Endothelial cell of umbilical vein (primary cell): ENCODE measurements at regions of chr1 and their contacts with region 1.

Region 1: DNA sequence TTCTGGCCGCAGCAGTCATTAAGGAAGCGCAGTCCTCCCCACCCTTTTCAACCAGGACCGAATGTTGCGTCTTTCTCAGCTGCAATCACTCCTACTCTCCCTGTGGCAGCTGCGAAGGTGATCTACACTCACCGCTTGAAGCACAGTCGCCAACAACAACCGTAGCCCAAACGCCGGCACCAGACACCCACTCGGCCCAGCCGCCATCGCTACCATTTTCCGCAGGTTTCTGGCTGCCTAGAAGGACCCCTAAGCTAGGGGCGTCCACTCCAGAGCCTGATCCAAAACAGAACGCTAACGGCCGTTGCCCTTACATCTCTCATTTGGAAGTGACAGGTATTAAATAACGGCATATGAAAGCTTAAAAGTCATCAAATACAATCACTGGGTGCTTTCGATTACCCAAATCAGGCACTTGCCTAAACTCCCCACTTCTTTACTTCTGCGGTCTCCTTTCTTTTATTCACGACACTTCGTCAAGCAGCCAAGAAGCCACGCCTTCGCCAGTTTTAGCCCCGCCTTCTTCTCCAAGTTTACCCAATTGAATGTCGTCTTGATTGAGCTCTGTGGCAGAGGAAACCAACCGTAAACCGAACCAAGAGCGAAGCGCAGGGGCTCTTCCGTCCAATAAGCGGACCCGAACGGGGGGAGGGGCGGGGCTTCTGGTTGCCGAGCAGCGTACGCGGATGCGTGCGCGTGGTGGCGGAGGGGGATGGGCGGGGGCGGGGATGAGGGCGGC is at the start of gene SELENOF:
- DNase-seq: peak; percentile 100
- H3K4me3 ChIP-seq: peak within 1 kb of the TSS; percentile 84 to 100 (median 99)
- H3K27ac ChIP-seq: peak within 1 kb of the TSS; percentile 100
- H3K4me1 ChIP-seq: peaks cover 16% of the 10 kb centered on the region
- H3K27me3 ChIP-seq: no peaks in the 10 kb centered on the region
- CTCF ChIP-seq: no peak
- POLR2A ChIP-seq: peak; percentile 86
- total RNA-seq, gene SELENOF: 202 and 205 TPM in 2 replicates

Region 2: GRCh38 chr1:86395771-86396497 is 518.1 kb before region 1 on chr1 and contains the start of gene ODF2L:
- CTCF ChIA-PET with region 1: no interaction called
- POLR2A ChIA-PET with region 1: interaction called, 5 read pairs
- dilution Hi-C with region 1: no loop called
- intact Hi-C with region 1: loop called (anchors 10 kb)
- DNase-seq: peak; percentile 90
- H3K4me3 ChIP-seq: peak within 1 kb of the TSS; percentile 85 to 96 (median 85)
- H3K27ac ChIP-seq: peak within 1 kb of the TSS; percentile 72
- H3K4me1 ChIP-seq: peaks cover 28% of the 10 kb centered on the region
- H3K27me3 ChIP-seq: peaks cover 0 to 2% of the 10 kb centered on the region in 2 experiments
- CTCF ChIP-seq: no peak
- POLR2A ChIP-seq: peak; percentile 57
- total RNA-seq, gene ODF2L: 74.7 and 86.3 TPM in 2 replicates

Region 3: DNA sequence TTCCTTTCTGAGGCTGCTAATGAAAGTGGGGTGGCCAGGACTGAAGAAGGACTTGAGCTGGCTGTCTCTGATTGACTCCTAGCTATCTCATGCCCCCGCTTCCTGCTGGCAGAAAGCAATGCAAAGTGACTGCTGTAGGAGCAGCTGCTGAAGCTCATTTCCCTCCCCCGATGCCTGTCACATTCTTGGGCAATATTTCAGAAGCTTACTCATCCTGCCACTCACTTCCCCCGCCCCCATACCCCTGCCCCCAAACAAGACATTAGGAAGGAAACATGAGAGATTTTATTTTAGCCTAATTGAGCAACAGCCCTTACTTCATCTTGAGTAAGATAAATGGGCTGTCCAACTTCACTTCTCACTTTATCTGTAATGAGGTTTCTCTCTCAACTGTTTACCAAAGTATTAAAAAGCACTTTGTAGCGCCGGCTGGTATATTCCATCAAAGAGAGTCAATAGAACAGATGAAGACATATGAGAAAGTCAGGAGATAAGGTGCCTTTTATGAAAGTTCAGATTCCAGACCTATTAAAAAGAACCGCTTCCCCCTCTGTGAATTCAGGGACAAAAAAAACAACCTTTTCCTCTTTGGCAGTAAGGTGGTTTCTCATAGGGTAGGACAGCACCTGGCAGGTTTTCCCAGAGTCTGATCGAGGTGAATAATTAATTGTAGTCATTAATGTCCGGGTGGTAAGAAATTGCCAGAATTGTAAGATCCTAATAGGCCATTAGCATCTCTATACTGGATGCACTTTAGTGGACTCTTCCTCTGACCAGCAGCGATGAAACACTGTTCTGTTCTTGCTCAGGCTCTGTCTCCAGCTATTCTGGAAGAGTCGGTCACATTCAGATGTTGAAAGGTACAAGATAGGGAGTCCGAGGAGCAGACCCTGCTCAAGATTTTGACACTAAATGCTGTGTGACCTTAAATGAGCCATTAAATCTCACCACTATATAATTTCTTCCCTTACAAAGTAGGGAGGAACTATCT is 139.5 kb before region 1 on chr1:
- CTCF ChIA-PET with region 1: interaction called, 3 read pairs
- POLR2A ChIA-PET with region 1: interaction called, 13 read pairs
- dilution Hi-C with region 1: no loop called
- intact Hi-C with region 1: no loop called
- DNase-seq: peak; percentile 85
- H3K4me3 ChIP-seq: peak overlapping the region in 1 of 3 experiments; percentile 50
- H3K27ac ChIP-seq: peak overlapping the region; percentile 81
- H3K4me1 ChIP-seq: peaks cover 42% of the 10 kb centered on the region
- H3K27me3 ChIP-seq: no peaks in the 10 kb centered on the region
- CTCF ChIP-seq: no peak
- POLR2A ChIP-seq: no peak

Region 4: DNA sequence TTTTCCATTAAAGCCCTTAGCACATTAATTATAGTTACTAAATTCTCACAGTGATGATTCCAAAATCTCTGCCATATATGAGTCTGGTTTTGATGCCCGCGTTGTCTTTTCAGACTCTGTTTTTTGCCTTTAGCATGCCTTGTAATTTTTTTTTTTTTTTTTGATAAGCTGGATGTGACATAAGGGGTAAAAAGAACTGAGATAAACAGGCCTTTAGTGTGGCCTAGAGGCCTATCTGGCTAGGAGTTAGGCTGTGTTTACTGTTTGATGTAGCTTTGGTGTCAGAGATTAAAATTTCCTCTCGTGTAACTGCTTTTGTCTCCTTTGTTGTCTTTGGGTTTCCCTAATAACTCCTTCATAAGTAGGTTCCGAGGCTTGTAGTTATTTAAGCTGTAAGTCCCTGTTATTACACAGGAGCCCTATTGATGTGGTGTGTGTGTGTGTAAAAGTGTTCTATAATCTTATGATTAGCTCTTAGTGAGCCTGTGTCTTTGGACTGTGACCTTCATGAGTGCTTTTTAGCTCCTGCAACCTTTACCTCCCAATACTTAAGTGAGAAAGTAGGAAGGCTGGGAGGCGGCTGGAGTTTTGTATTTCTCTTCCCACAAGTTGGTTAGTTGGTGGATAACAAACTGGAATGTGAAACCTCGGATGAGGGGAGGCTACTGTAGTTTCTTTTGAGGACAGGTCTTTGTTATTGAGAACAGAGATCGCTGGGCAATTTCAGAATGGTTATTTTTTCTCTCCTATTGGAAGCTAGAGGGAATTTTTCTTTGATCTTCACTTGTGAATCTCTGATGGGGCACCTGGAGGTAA is 19.7 kb after region 1 on chr1:
- CTCF ChIA-PET with region 1: interaction called, 14 read pairs
- POLR2A ChIA-PET with region 1: interaction called, 3 read pairs
- dilution Hi-C with region 1: no loop called
- intact Hi-C with region 1: no loop called
- DNase-seq: peak; percentile 6
- H3K4me3 ChIP-seq: no peak overlapping the region
- H3K27ac ChIP-seq: no peak overlapping the region
- H3K4me1 ChIP-seq: peaks cover 7% of the 10 kb centered on the region
- H3K27me3 ChIP-seq: no peaks in the 10 kb centered on the region
- CTCF ChIP-seq: no peak
- POLR2A ChIP-seq: no peak

Region 5: DNA sequence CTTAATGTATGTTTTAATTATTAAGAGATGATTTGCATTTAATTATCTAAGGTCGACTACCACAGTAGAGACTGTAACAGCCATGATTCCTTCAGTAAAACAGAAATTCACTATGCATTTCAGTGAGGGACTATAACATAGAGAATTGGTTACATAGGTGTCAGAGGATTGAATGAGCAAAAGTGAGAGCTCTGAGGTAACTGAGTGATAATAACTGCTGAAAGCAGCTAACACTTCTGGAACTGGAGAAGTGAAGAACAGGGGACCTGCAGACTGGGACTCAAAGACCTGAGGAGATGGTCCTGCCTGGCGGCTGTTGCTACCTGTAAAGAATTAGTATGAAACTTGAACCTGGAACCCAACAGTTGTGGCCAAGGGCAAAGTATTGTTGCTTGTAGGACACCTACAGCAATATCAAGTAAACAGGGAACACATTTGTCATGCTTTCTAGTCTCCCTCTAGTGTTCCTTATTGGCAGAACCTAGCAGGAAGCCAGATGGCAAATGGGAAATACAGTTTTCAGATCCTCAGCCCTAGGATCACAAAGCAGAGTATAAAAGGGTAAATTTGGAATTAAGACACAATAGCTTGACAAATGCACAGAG is 111.0 kb after region 1 on chr1:
- CTCF ChIA-PET with region 1: no interaction called
- POLR2A ChIA-PET with region 1: no interaction called
- dilution Hi-C with region 1: no loop called
- intact Hi-C with region 1: loop called (anchors 5 kb)
- DNase-seq: peak; percentile 56
- H3K4me3 ChIP-seq: no peak overlapping the region
- H3K27ac ChIP-seq: no peak overlapping the region
- H3K4me1 ChIP-seq: peaks cover 23% of the 10 kb centered on the region
- H3K27me3 ChIP-seq: no peaks in the 10 kb centered on the region
- CTCF ChIP-seq: peak; percentile 35 to 46
- POLR2A ChIP-seq: no peak

Region 6: DNA sequence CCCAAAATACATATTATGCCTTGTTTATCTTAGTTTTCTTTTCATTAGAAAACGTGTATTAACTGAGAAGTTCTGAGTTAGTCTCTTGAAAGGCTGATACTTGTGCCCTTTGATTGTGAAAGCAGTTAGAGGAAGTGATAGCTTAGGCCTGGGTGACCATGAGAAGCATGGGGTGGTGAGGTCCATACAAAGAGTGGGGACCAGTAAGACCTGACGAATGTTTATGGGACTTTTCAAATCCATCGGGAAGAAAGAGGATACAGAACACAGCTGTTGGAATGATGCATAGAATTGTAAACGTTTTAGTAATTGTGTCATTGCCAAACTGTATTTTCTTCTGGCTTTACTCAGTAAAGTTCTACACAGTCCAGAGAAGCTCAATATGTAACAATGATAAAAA is 674.4 kb after region 1 on chr1:
- CTCF ChIA-PET with region 1: no interaction called
- POLR2A ChIA-PET with region 1: no interaction called
- dilution Hi-C with region 1: no loop called
- intact Hi-C with region 1: no loop called
- DNase-seq: no peak
- H3K4me3 ChIP-seq: no peak overlapping the region
- H3K27ac ChIP-seq: no peak overlapping the region
- H3K4me1 ChIP-seq: no peaks in the 10 kb centered on the region
- H3K27me3 ChIP-seq: no peaks in the 10 kb centered on the region
- CTCF ChIP-seq: no peak
- POLR2A ChIP-seq: no peak

Region 7: DNA sequence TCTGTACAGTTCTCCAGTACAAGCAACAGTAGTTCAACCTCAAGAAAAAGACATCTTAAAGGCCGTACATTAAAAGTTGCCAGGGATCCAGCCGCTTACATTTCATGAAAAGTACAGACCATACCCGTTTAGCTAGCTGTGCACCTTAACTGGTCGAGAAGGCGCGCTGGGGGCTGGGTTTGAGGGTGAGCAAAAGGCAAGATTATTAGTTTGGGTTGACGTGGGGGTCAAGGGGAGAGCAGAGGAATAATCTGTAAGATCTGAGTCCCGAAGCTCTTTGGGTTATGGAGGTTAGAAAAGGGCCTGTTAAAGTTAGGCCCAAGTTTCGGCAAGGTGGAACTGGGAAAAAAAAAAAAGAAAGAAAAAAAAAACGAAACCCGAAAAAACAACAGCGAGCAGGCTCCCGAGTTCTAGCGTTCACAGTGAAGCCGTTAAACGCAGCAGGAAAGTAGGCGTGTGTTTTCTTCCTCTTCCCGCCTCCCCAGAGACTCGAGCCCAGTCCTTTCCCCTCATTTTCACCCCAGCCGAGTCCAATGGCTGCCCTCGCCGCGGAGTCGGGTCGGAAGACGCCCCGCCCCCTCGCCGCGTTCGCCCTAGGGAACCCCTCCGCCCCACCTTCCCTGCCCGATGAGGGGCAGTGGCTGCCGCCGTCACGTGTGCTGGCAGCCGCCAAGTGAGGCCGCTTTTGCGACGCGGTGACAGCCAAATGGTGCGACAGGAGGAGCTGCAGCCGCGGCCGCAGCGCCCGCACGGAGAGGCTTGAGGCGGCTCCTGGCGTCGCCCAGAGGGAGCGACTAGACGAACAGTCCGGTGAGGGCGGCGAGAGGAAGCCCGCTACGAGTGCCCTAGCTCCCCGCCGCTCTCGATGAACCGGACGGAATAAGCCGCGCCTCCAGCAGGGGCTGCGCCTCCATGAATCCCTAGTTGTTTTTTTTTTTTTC is 1769.7 kb after region 1 on chr1 and contains the start of gene PKN2:
- CTCF ChIA-PET with region 1: no interaction called
- POLR2A ChIA-PET with region 1: no interaction called
- dilution Hi-C with region 1: no loop called
- intact Hi-C with region 1: loop called (anchors 10 kb)
- DNase-seq: peak; percentile 100
- H3K4me3 ChIP-seq: peak within 1 kb of the TSS; percentile 91 to 100 (median 98)
- H3K27ac ChIP-seq: peak within 1 kb of the TSS; percentile 64
- H3K4me1 ChIP-seq: peaks cover 32% of the 10 kb centered on the region
- H3K27me3 ChIP-seq: no peaks in the 10 kb centered on the region
- CTCF ChIP-seq: peak in 1 of 2 donors; percentile 14
- POLR2A ChIP-seq: peak; percentile 94
- total RNA-seq, gene PKN2: 47.3 and 49.1 TPM in 2 replicates